ENCODE measurements at regions of chr3 and their contacts with region 1.

Region 1: GRCh38 chr3:171436380-171436779 is 23.8 kb downstream of the TNIK start:
- DNase-seq: peak; percentile 60
- H3K4me3 ChIP-seq: no peak overlapping the region
- H3K27ac ChIP-seq: peak overlapping the region; percentile 33
- H3K4me1 ChIP-seq: peaks cover 27% of the 10 kb centered on the region
- H3K27me3 ChIP-seq: no peaks in the 10 kb centered on the region
- CTCF ChIP-seq: no peak
- POLR2A ChIP-seq: no peak

Region 2: DNA sequence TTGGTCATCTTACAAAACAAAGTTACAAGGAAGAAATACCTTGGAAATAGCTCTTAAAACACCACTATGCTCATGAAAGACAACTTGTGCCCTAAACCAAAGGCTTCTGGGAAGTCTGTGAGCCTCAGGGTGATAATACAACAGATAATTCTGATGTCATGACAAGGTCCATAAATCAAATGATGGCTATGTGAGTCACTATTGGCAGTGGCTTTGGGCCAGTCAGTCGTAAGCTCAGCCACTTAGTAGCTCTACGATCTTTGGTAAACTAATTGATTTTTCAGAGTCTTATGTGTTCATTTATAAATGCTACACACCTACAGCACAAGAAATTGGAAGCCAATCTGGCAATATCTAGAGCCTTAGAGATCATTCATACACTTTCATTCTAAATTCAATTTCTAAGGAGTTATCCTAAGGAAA is 11.0 kb after region 1 on chr3:
- CTCF ChIA-PET with region 1: interaction called, 10 read pairs
- POLR2A ChIA-PET with region 1: no interaction called
- dilution Hi-C with region 1: no loop called
- intact Hi-C with region 1: no loop called
- DNase-seq: peak; percentile 83
- H3K4me3 ChIP-seq: no peak overlapping the region
- H3K27ac ChIP-seq: no peak overlapping the region
- H3K4me1 ChIP-seq: peaks cover 21% of the 10 kb centered on the region
- H3K27me3 ChIP-seq: no peaks in the 10 kb centered on the region
- CTCF ChIP-seq: no peak
- POLR2A ChIP-seq: no peak